AG04450 (cell line): ENCODE measurements at regions of chr2 and their contacts with region 1.

Region 1: DNA sequence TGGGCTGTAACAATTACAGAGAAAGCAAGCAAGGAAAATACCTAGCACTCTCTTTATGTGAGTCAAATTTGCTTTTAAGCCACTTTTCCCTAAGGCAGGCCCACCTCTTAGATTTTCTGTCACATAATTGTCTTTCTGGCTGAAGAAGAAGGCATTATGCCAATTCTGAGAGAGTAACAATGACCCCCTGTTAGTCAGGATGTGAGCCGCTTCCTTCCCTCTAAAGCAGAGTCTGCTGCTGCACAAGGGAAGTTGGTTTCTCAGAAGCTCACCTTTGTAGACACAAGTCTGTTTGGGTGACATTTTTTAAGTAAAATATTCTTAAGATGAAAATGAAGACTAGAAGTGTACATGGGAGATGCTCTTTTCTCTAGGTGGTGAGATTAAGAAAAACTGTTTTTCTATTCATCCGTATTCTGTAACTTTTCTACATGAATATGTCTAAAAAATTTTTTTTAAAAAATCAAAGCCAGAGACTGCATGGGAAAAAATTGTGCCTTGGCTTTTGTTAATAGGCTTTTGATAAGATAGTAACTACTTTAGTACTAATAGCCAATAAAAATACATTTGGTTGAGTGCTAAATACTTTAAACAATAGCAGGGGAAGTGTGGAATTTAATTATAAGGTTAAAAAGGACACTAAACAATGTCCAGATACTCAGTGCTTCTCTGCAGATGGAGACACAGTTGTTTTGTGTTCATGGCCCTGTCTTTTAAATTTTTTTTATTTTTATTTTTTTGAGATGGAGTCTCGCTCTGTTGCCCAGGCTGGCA is 33.4 kb upstream of the VPS54 start:
- DNase-seq: no peak
- H3K4me3 ChIP-seq: no peak overlapping the region
- H3K27ac ChIP-seq: no peak overlapping the region
- H3K27me3 ChIP-seq: peaks cover 2% of the 10 kb centered on the region
- CTCF ChIP-seq: no peak

Region 2: DNA sequence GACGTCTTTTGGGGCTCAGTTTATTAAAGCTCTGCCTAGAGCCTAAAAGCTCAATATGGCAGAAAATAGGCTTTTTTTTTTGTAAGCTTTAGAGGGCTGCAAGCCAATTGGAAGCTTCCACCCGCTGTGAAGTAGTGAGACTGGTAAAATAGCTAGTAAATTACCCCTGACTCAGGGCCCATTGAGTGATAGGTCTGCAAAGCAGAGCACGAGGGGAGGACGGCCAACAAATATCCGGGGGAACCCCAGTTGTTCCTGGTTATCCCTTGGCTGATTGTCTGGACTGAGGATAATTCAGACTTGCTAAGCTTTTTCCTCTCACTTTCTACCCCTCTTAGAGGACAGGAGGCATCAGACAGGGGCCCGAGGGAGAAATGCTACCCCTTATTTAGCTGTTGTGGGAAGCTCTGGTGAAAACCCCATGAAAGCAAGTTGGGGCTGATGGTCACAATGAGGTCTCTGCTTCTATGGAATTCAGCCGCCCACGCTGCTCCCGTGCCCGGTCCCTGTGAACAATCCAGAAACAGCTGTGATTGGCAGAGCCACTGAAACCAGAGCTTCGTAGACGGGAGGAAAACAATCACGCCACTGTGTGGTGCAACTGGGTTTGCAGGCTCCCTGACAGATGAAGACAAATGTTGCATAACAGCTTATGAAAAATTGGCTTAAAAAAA is 259.4 kb after region 1 on chr2:
- CTCF ChIA-PET with region 1: interaction called, 25 read pairs
- POLR2A ChIA-PET with region 1: no interaction called
- DNase-seq: peak; percentile 24
- H3K4me3 ChIP-seq: no peak overlapping the region
- H3K27ac ChIP-seq: peak overlapping the region; percentile 39
- H3K27me3 ChIP-seq: peaks cover 35% of the 10 kb centered on the region
- CTCF ChIP-seq: peak; percentile 41

Region 3: GRCh38 chr2:64404002-64404731 is 351.5 kb after region 1 on chr2:
- CTCF ChIA-PET with region 1: no interaction called
- POLR2A ChIA-PET with region 1: no interaction called
- DNase-seq: no peak
- H3K4me3 ChIP-seq: no peak overlapping the region
- H3K27ac ChIP-seq: no peak overlapping the region
- H3K27me3 ChIP-seq: peaks cover 14% of the 10 kb centered on the region
- CTCF ChIP-seq: no peak